OCI-LY7 (cell line): ENCODE measurements at regions of chr17 and their contacts with region 1.

Region 1: GRCh38 chr17:1716076-1716995 is 6.2 kb upstream of the TLCD2 start:
- DNase-seq: peak; percentile 100
- H3K4me3 ChIP-seq: peak overlapping the region; percentile 85
- H3K27ac ChIP-seq: peak overlapping the region; percentile 88
- H3K4me1 ChIP-seq: peaks cover 30% of the 10 kb centered on the region
- CTCF ChIP-seq: no peak

Region 2: GRCh38 chr17:1561400-1562175 is 154.7 kb before region 1 on chr17:
- CTCF ChIA-PET with region 1: no interaction called
- POLR2A ChIA-PET with region 1: no interaction called
- intact Hi-C with region 1: loop called (anchors 10 kb)
- DNase-seq: peak; percentile 51
- H3K4me3 ChIP-seq: peak overlapping the region; percentile 82
- H3K27ac ChIP-seq: no peak overlapping the region
- H3K4me1 ChIP-seq: peaks cover 23% of the 10 kb centered on the region
- CTCF ChIP-seq: peak; percentile 60

Region 3: GRCh38 chr17:1684378-1685189 is 31.8 kb before region 1 on chr17 and contains the start of gene PRPF8:
- CTCF ChIA-PET with region 1: no interaction called
- POLR2A ChIA-PET with region 1: interaction called, 5 read pairs
- intact Hi-C with region 1: loop called (anchors 2 kb)
- DNase-seq: peak; percentile 98
- H3K4me3 ChIP-seq: peak within 1 kb of the TSS; percentile 95
- H3K27ac ChIP-seq: peak within 1 kb of the TSS; percentile 54
- H3K4me1 ChIP-seq: peaks cover 12% of the 10 kb centered on the region
- CTCF ChIP-seq: no peak
- total RNA-seq, gene PRPF8: 108 and 162 TPM in 2 replicates

Region 4: GRCh38 chr17:1908699-1909309 is 192.5 kb after region 1 on chr17:
- CTCF ChIA-PET with region 1: no interaction called
- POLR2A ChIA-PET with region 1: interaction called, 10 read pairs
- intact Hi-C with region 1: loop called (anchors 2 kb)
- DNase-seq: peak; percentile 79
- H3K4me3 ChIP-seq: peak overlapping the region; percentile 44
- H3K27ac ChIP-seq: no peak overlapping the region
- H3K4me1 ChIP-seq: peaks cover 52% of the 10 kb centered on the region
- CTCF ChIP-seq: peak; percentile 87

Region 5: GRCh38 chr17:2401426-2402221 is 685.3 kb after region 1 on chr17:
- CTCF ChIA-PET with region 1: no interaction called
- POLR2A ChIA-PET with region 1: no interaction called
- intact Hi-C with region 1: loop called (anchors 5 kb)
- DNase-seq: peak; percentile 99
- H3K4me3 ChIP-seq: peak overlapping the region; percentile 81
- H3K27ac ChIP-seq: peak overlapping the region; percentile 82
- H3K4me1 ChIP-seq: peaks cover 27% of the 10 kb centered on the region
- CTCF ChIP-seq: no peak